GM12878 (cell line): ENCODE measurements at regions of chr3 and their contacts with region 1.

Region 1: DNA sequence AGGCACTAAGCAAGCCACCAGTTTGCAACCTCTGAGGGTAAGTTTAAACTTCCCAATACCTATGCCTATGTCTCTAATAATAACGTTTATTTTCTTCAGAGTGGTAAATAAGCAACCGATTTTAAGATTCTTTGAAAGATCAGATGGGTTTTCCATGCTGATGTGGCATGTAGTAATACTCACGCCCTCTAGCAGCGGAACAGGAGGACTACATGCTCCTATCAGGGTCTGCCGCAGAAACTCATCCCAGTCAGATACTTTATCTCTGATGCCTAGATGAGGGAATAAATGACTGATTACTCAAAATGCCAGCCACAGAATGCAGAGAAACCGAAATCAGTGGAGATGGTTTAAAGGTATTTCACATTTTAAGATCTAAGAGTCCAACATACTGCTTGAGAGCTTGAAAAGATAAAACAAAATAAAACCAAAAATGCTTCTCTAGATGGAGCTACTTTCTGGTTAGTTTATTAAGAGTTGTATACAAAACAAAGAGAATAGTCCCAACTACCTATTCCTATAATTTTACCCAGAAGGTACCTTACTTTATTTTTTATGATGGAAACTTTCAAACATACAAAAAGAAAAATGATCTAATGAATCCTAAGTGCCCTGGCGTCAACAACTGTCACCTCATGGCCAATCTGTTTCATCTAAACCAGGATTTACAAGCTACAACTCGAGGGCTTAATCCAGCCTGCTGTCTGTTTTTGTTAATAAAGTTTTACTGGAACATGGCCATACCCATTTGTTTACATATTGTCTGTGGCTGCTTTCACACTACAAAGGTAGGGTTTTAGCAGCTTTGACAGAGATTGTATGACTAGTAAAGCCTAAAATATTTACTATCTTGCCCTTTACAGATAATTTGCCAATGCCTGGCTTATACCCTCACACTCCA is 37.5 kb upstream of the STIMATE start:
- DNase-seq: peak; percentile 11
- ATAC-seq: peak; percentile 97
- H3K4me3 ChIP-seq: no peak overlapping the region
- H3K27ac ChIP-seq: no peak overlapping the region
- H3K4me1 ChIP-seq: no peaks in the 10 kb centered on the region
- H3K27me3 ChIP-seq: no peaks in the 10 kb centered on the region
- CTCF ChIP-seq: peak; percentile 72 to 84 (median 81)
- EP300 ChIP-seq: no peak
- POLR2A ChIP-seq: no peak
- RAD21 ChIP-seq: peak; percentile 67

Region 2: DNA sequence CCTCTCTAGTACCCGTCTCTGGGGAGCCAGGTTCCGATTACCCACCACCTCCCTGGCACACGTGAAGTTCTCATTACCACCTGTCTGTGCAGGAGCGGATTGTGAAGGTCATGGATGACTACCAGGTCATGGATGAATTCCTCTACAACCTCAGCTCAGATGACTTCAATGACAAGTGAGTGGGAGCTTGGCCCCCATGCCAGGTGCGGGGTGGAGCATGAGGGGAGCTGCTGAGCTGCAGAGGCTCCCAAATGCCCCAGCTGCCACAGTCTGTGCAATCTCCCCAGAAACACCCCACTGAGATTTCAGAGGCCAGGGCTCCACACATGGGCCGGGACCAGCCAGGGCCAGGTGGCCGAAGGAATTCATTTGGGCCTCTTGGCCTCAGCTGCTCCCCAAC is 584.5 kb before region 1 on chr3:
- CTCF ChIA-PET with region 1: no interaction called
- POLR2A ChIA-PET with region 1: no interaction called
- RAD21 ChIA-PET with region 1: no interaction called
- SMC1A ChIA-PET with region 1: no interaction called
- in situ Hi-C with region 1: no loop called
- intact Hi-C with region 1: no loop called
- DNase-seq: no peak
- ATAC-seq: no peak; the same call in 2 of the 3 replicates
- H3K4me3 ChIP-seq: no peak overlapping the region
- H3K27ac ChIP-seq: no peak overlapping the region
- H3K4me1 ChIP-seq: no peaks in the 10 kb centered on the region
- H3K27me3 ChIP-seq: no peaks in the 10 kb centered on the region
- CTCF ChIP-seq: no peak
- EP300 ChIP-seq: no peak
- POLR2A ChIP-seq: no peak
- RAD21 ChIP-seq: no peak

Region 3: GRCh38 chr3:52742418-52743041 is 192.3 kb before region 1 on chr3:
- CTCF ChIA-PET with region 1: interaction called, 16 read pairs
- POLR2A ChIA-PET with region 1: no interaction called
- RAD21 ChIA-PET with region 1: interaction called, 8 read pairs
- SMC1A ChIA-PET with region 1: interaction called, 3 read pairs
- in situ Hi-C with region 1: no loop called
- intact Hi-C with region 1: loop called (anchors 5 kb)
- DNase-seq: peak; percentile 15
- ATAC-seq: peak; percentile 83
- H3K4me3 ChIP-seq: no peak overlapping the region
- H3K27ac ChIP-seq: no peak overlapping the region
- H3K4me1 ChIP-seq: no peaks in the 10 kb centered on the region
- H3K27me3 ChIP-seq: no peaks in the 10 kb centered on the region
- CTCF ChIP-seq: peak; percentile 60 to 80 (median 68); a peak in 5 of 6 replicates
- EP300 ChIP-seq: no peak
- POLR2A ChIP-seq: no peak
- RAD21 ChIP-seq: peak; percentile 91

Region 4: DNA sequence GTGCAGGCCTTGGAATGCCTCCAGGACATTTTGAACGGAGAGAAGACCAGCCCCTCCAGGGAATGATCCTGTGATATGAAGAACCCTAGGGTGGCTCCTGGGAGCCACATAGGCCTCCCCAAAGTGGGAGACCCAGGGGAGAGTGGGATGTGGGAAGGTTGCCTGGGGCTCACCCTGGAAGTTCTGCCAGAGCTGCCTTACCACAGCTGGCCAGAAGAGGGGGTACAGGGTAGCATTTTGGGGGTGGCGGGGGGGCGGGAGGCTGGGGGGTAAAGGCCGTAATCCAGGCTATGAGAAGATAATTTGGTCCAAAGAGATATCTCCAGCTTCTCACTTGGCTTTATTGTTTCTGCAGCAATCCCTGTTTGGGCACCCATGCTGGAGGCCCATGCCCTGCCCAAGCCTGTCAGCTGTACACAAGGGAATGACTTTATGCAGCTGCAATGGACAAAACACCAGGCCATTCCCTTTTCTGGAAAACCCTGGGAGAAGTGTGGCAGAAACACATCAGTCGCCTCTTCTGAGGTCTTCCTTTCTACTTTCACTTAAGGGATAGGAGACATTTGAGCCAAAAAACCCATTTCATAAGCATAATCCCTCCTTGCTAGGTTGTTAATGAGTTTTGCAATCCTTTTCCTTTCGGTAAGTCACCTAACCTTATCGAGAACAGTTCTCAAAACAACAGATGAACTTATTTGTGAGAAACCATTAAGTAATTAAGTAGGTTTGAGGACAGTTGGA is 89.0 kb before region 1 on chr3:
- CTCF ChIA-PET with region 1: interaction called, 27 read pairs
- POLR2A ChIA-PET with region 1: no interaction called
- RAD21 ChIA-PET with region 1: interaction called, 4 read pairs
- SMC1A ChIA-PET with region 1: interaction called, 4 read pairs
- in situ Hi-C with region 1: no loop called
- intact Hi-C with region 1: loop called (anchors 1 kb)
- DNase-seq: no peak
- ATAC-seq: peak; percentile 74
- H3K4me3 ChIP-seq: no peak overlapping the region
- H3K27ac ChIP-seq: no peak overlapping the region
- H3K4me1 ChIP-seq: peaks cover 8% of the 10 kb centered on the region
- H3K27me3 ChIP-seq: no peaks in the 10 kb centered on the region
- CTCF ChIP-seq: peak; percentile 24 to 62 (median 43); a peak in 5 of 6 replicates
- EP300 ChIP-seq: no peak
- POLR2A ChIP-seq: no peak
- RAD21 ChIP-seq: 0 out of 2 replicates have a peak, but pooled peaks have one; percentile 15

Region 5: GRCh38 chr3:52851348-52851747 is 83.5 kb before region 1 on chr3:
- CTCF ChIA-PET with region 1: interaction called, 27 read pairs
- POLR2A ChIA-PET with region 1: no interaction called
- RAD21 ChIA-PET with region 1: interaction called, 4 read pairs
- SMC1A ChIA-PET with region 1: interaction called, 5 read pairs
- in situ Hi-C with region 1: no loop called
- intact Hi-C with region 1: loop called (anchors 1 kb)
- DNase-seq: no peak
- ATAC-seq: peak; percentile 78
- H3K4me3 ChIP-seq: no peak overlapping the region
- H3K27ac ChIP-seq: no peak overlapping the region
- H3K4me1 ChIP-seq: peaks cover 3% of the 10 kb centered on the region
- H3K27me3 ChIP-seq: no peaks in the 10 kb centered on the region
- CTCF ChIP-seq: peak; percentile 65 to 83 (median 71)
- EP300 ChIP-seq: no peak
- POLR2A ChIP-seq: no peak
- RAD21 ChIP-seq: peak; percentile 93

Region 6: DNA sequence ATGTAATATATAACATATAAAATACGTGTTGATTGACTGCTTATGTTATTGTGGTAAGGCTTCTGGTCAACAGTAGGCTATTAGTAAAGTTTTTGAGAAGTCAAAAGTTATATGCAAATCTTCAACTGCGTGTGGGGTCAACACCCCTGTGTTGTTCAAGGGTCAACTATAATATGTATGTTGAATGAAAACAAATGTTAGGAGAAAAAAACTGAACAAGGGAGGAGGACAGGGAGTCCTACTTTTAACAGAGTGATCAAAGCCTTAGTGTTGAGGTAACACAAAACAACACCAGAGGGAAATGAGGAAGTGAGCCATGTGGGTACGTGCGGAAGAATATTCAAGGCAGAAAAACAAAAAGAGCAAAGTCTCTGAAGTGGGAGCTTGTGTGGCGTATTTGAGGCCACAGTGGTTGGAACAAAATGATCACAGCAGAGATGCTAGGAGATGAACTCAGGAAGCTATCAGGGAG is 48.5 kb after region 1 on chr3:
- CTCF ChIA-PET with region 1: interaction called, 56 read pairs
- POLR2A ChIA-PET with region 1: no interaction called
- RAD21 ChIA-PET with region 1: interaction called, 6 read pairs
- SMC1A ChIA-PET with region 1: interaction called, 11 read pairs
- in situ Hi-C with region 1: no loop called
- intact Hi-C with region 1: no loop called
- DNase-seq: peak; percentile 88
- ATAC-seq: peak; percentile 96
- H3K4me3 ChIP-seq: peak overlapping the region; percentile 41; the same call in 1 of the 2 replicates
- H3K27ac ChIP-seq: peak overlapping the region; percentile 90
- H3K4me1 ChIP-seq: peaks cover 18% of the 10 kb centered on the region
- H3K27me3 ChIP-seq: no peaks in the 10 kb centered on the region
- CTCF ChIP-seq: no peak
- EP300 ChIP-seq: peak; percentile 95 to 98
- POLR2A ChIP-seq: peak; percentile 32; the same call in 1 of the 2 replicates
- RAD21 ChIP-seq: peak; percentile 29; the same call in 1 of the 2 replicates

Region 7: GRCh38 chr3:53072653-53073552 is 138.0 kb after region 1 on chr3:
- CTCF ChIA-PET with region 1: interaction called, 10 read pairs
- POLR2A ChIA-PET with region 1: no interaction called
- RAD21 ChIA-PET with region 1: no interaction called
- SMC1A ChIA-PET with region 1: interaction called, 4 read pairs
- in situ Hi-C with region 1: no loop called
- intact Hi-C with region 1: loop called (anchors 1 kb)
- DNase-seq: peak; percentile 43
- ATAC-seq: peak; percentile 97
- H3K4me3 ChIP-seq: peak overlapping the region; percentile 85
- H3K27ac ChIP-seq: peak overlapping the region; percentile 51
- H3K4me1 ChIP-seq: peaks cover 9% of the 10 kb centered on the region
- H3K27me3 ChIP-seq: no peaks in the 10 kb centered on the region
- CTCF ChIP-seq: peak; percentile 95 to 96 (median 95); a peak in 5 of 6 replicates
- EP300 ChIP-seq: no peak
- POLR2A ChIP-seq: no peak
- RAD21 ChIP-seq: peak; percentile 86

Region 8: GRCh38 chr3:53083521-53083920 is 148.6 kb after region 1 on chr3:
- CTCF ChIA-PET with region 1: no interaction called
- POLR2A ChIA-PET with region 1: no interaction called
- RAD21 ChIA-PET with region 1: no interaction called
- SMC1A ChIA-PET with region 1: no interaction called
- in situ Hi-C with region 1: no loop called
- intact Hi-C with region 1: no loop called
- DNase-seq: no peak
- ATAC-seq: no peak
- H3K4me3 ChIP-seq: no peak overlapping the region
- H3K27ac ChIP-seq: no peak overlapping the region
- H3K4me1 ChIP-seq: no peaks in the 10 kb centered on the region
- H3K27me3 ChIP-seq: no peaks in the 10 kb centered on the region
- CTCF ChIP-seq: no peak
- EP300 ChIP-seq: no peak
- POLR2A ChIP-seq: no peak
- RAD21 ChIP-seq: no peak

Region 9: GRCh38 chr3:53130179-53131061 is 195.5 kb after region 1 on chr3 and contains the start of gene RFT1:
- CTCF ChIA-PET with region 1: no interaction called
- POLR2A ChIA-PET with region 1: no interaction called
- RAD21 ChIA-PET with region 1: no interaction called
- SMC1A ChIA-PET with region 1: no interaction called
- in situ Hi-C with region 1: no loop called
- intact Hi-C with region 1: no loop called
- DNase-seq: peak; percentile 73
- ATAC-seq: peak; percentile 89
- H3K4me3 ChIP-seq: peak within 1 kb of the TSS; percentile 92
- H3K27ac ChIP-seq: peak within 1 kb of the TSS; percentile 87
- H3K4me1 ChIP-seq: peaks cover 7% of the 10 kb centered on the region; the same call in 1 of the 2 replicates
- H3K27me3 ChIP-seq: no peaks in the 10 kb centered on the region
- CTCF ChIP-seq: no peak
- EP300 ChIP-seq: no peak
- POLR2A ChIP-seq: peak; percentile 98
- RAD21 ChIP-seq: no peak
- polyA plus RNA-seq, gene RFT1: 24.7 to 29.0 TPM